Gastrocnemius medialis (tissue), 4 donors: ENCODE measurements at regions of chrX and their contacts with region 1.

Region 1: DNA sequence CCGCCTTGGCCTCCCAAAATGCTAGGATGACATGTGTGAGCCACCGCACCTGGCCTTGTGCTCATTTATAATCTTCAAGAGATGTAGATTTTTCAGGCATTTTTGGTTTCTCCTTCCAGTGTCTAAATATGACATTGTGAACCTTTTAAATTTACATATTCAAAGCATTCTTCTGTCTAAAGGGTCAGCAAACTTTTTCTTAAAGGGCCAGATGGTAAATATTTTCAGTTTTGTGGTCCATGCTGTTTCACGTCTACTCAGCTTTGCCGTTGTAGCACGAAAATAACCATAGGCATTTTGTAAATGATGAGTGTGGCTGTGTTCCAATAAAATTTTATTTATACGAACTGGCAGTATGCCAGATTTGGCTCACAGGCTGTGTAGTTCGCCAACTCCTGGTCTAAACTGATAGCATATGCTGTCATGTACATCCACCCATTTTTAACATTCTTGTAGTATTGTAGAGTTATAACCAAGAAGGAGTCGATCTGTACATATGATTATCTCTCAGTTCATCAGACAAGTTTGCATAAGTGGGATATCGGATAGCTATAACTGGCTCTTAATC is 12.7 kb upstream of the GCNA start:
- DNase-seq: no peak
- ATAC-seq: no peak
- H3K4me3 ChIP-seq: no peak overlapping the region
- H3K27ac ChIP-seq: peak overlapping the region in 1 of 4 donors; percentile 15
- H3K4me1 ChIP-seq: no peaks in the 10 kb centered on the region
- H3K27me3 ChIP-seq: no peaks in the 10 kb centered on the region
- CTCF ChIP-seq: no peak
- POLR2A ChIP-seq: no peak

Region 2: GRCh38 chrX:71378732-71379131 is 186.8 kb before region 1 on chrX:
- in situ Hi-C with region 1: loop called in 1 of 4 experiments (anchors 25 kb)
- intact Hi-C with region 1: no loop called
- DNase-seq: no peak
- ATAC-seq: no peak
- H3K4me3 ChIP-seq: no peak overlapping the region
- H3K27ac ChIP-seq: no peak overlapping the region
- H3K4me1 ChIP-seq: no peaks in the 10 kb centered on the region
- H3K27me3 ChIP-seq: no peaks in the 10 kb centered on the region
- CTCF ChIP-seq: no peak
- POLR2A ChIP-seq: no peak

Region 3: DNA sequence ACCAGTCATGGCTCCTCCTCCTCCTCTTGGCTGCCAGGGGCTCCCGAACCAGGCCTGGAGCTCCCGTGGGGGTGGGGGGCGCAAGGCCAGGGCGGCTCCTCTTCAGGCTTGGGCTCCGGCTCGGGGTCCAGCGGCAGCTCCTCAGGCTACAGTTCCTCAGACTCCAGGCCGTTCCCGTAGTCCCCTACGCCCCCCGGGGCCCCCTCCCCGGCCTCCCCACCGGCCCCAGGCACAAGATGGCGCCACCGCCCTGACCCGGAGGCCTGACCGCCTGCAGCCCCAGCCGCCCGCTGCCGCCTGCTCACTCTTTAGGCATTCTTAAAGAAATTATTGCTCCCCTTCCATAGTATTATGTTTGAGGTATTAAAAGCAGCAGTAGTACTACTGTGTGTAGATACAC is 144.9 kb before region 1 on chrX:
- in situ Hi-C with region 1: loop called in 1 of 4 experiments (anchors 25 kb)
- intact Hi-C with region 1: no loop called
- DNase-seq: no peak
- ATAC-seq: no peak
- H3K4me3 ChIP-seq: no peak overlapping the region
- H3K27ac ChIP-seq: no peak overlapping the region
- H3K4me1 ChIP-seq: no peaks in the 10 kb centered on the region
- H3K27me3 ChIP-seq: no peaks in the 10 kb centered on the region
- CTCF ChIP-seq: no peak
- POLR2A ChIP-seq: no peak

Region 4: DNA sequence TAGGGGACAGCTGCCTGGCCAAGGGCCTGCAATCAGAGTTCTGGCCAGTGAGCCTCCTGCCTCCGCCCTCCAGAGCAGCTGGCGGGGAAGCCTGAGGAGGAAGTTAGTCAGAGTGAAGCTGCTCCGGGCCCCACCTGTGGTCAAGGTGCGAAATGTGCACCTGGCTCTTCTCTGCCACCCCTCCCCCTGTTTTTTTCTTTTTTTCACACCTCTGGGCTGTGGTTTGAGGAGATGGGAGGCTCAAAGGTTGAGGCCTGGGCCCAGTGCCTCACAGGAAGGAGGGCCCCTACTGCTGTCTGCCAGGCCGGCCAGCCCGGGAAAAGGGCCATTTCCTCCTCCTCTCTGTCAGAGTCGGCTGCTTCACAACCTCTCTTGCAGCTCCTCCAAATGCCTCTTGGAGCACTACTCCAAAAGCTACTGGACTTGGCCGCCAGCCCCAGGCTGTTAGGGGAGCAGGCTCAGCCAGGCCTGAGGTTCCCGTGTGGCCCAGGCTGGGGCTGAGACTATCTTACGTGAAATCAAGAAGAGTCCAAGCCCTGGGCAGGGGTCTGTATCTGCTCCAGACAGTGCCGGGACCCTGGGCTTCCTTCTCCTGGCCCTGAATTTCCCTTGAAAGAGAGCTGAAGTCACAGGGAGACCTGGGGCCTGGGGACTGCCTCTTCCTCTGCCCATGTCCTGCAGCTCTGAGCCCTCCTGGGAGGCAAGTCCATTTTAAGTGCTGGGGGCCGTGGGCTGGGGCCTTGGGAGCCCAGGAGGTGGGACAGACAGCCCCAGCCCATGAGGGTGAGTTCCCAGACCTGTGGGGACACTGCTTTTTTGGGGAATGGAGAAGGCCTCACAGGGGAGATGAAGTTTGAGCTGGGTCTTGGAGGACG is 57.3 kb after region 1 on chrX:
- in situ Hi-C with region 1: no loop called
- intact Hi-C with region 1: no loop called
- DNase-seq: peak; percentile 49 to 84
- ATAC-seq: peak; percentile 67 to 88
- H3K4me3 ChIP-seq: no peak overlapping the region
- H3K27ac ChIP-seq: peak overlapping the region; percentile 56 to 86 (median 73)
- H3K4me1 ChIP-seq: peaks cover 9 to 15% of the 10 kb centered on the region in 2 donors
- H3K27me3 ChIP-seq: no peaks in the 10 kb centered on the region
- CTCF ChIP-seq: peak in 1 of 5 experiments; percentile 17
- POLR2A ChIP-seq: no peak